GM12878 (cell line): ENCODE measurements at regions of chr7 and their contacts with region 1.

Region 1: DNA sequence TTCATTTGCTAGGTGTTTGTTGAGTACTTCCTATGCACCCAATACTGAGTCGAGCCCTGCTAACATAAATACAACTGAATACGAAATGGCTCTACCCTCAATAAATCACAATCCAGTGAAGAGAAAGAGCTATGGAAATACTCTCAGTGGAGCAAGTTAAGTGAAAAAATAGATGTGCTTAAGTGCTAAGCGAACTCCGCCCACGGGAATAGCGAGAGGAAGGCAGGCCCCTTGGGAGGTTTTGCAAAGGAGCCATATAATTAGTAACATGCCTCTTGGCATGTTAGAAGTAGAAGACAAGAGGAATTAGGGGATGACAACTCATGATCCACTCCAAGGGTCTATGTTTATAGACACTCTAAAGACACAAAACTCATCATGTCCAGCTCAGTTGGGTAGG is 42.8 kb upstream of the TSPAN33 start:
- DNase-seq: no peak
- ATAC-seq: no peak; the same call in 2 of the 3 replicates
- H3K4me3 ChIP-seq: no peak overlapping the region
- H3K27ac ChIP-seq: no peak overlapping the region
- H3K4me1 ChIP-seq: peaks cover 21% of the 10 kb centered on the region
- H3K27me3 ChIP-seq: no peaks in the 10 kb centered on the region
- CTCF ChIP-seq: no peak
- EP300 ChIP-seq: no peak
- POLR2A ChIP-seq: no peak
- RAD21 ChIP-seq: no peak

Region 2: DNA sequence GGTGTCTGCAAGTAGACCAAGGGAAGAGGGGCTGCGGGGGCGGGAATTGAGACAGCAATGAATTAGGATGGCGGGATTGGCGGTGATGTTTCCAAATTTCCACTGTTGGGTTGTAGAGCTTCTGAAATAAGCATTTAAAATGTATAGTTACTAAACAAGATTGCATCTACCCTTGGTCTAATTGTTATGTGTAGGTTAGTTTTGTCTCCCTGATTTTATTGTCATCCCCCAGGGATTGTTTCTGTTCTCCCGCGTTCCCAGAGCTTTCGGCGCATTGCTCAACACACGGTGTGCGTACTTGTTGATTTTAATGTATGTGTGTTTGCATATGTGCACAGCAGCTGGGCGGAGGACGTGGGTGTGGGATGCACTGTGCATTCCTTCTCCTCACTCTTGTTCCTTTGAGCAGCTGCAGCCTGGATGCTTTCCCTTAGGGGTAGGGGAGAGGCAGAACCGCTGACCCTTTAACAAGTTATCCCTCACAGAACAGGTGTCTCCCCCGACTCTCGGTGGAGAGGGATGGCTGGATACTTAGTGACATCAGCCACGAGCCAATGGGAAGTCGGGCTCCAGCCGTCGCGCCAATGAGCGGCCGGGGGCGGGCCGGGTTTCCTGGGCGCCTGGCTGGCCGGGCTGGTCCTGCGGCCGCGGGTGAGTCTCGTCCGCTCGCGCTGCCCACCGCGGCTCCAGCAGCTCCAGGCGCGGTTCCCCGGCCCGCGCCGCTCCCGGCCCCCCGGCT is 42.5 kb after region 1 on chr7 and contains the start of gene TSPAN33:
- CTCF ChIA-PET with region 1: interaction called, 3 read pairs
- POLR2A ChIA-PET with region 1: no interaction called
- RAD21 ChIA-PET with region 1: interaction called, 20 read pairs
- SMC1A ChIA-PET with region 1: interaction called, 21 read pairs
- in situ Hi-C with region 1: no loop called
- intact Hi-C with region 1: no loop called
- DNase-seq: no peak
- ATAC-seq: peak; percentile 76
- H3K4me3 ChIP-seq: peak within 1 kb of the TSS; percentile 97
- H3K27ac ChIP-seq: peak within 1 kb of the TSS; percentile 92
- H3K4me1 ChIP-seq: peaks cover 28% of the 10 kb centered on the region
- H3K27me3 ChIP-seq: no peaks in the 10 kb centered on the region
- CTCF ChIP-seq: no peak
- EP300 ChIP-seq: no peak
- POLR2A ChIP-seq: peak; percentile 73
- RAD21 ChIP-seq: no peak
- polyA plus RNA-seq, gene TSPAN33: 17.8 to 30.0 TPM